Endothelial cell of umbilical vein (primary cell): ENCODE measurements at regions of chr12 and their contacts with region 1.

Region 1: GRCh38 chr12:15584366-15585041 is 204.7 kb downstream of the EPS8 start:
- DNase-seq: peak; percentile 52
- H3K4me3 ChIP-seq: no peak overlapping the region
- H3K27ac ChIP-seq: no peak overlapping the region
- H3K4me1 ChIP-seq: no peaks in the 10 kb centered on the region
- H3K27me3 ChIP-seq: peaks cover 5 to 11% of the 10 kb centered on the region in 2 experiments
- CTCF ChIP-seq: peak; percentile 48 to 60
- POLR2A ChIP-seq: no peak

Region 2: GRCh38 chr12:14769969-14770495 is 814.5 kb before region 1 on chr12:
- CTCF ChIA-PET with region 1: no interaction called
- POLR2A ChIA-PET with region 1: no interaction called
- dilution Hi-C with region 1: no loop called
- intact Hi-C with region 1: no loop called
- DNase-seq: peak; percentile 77
- H3K4me3 ChIP-seq: peak overlapping the region; percentile 22 to 82 (median 70)
- H3K27ac ChIP-seq: peak overlapping the region; percentile 91
- H3K4me1 ChIP-seq: peaks cover 7% of the 10 kb centered on the region
- H3K27me3 ChIP-seq: no peaks in the 10 kb centered on the region
- CTCF ChIP-seq: peak; percentile 73 to 87
- POLR2A ChIP-seq: peak; percentile 25

Region 3: DNA sequence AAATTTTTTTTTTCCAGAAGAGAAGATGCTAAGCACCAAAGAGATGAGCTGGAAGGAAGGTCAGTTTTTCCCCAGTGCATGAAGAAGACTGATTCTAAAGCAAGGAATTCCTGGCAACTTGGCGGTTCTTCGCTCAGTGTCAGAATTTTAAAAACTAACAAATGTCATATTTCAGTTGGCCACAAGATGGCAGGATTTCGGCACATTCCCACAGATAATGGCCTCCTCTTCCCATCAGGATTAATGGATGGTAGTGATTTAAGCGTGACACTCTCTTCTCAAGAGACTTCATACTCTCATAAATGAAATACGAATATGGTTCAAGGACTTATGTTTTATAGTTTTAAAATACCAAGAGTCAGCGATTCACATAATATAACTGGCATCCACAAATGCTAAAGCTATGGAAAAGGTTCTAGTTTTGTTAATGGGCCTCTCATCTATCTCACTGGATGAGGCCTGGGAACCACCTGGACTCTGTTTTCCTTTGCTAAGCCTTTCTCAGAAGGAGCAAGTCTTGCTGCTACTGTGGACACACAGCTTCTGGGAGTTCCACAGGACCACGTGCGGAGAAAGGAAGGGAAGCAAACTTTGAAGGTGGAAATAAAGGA is 308.3 kb before region 1 on chr12:
- CTCF ChIA-PET with region 1: interaction called, 84 read pairs
- POLR2A ChIA-PET with region 1: no interaction called
- dilution Hi-C with region 1: no loop called
- intact Hi-C with region 1: loop called (anchors 1 kb)
- DNase-seq: peak; percentile 52
- H3K4me3 ChIP-seq: no peak overlapping the region
- H3K27ac ChIP-seq: no peak overlapping the region
- H3K4me1 ChIP-seq: no peaks in the 10 kb centered on the region
- H3K27me3 ChIP-seq: peaks cover 0 to 1% of the 10 kb centered on the region in 2 experiments
- CTCF ChIP-seq: peak; percentile 58 to 59
- POLR2A ChIP-seq: no peak

Region 4: GRCh38 chr12:15540469-15540872 is 44.0 kb before region 1 on chr12:
- CTCF ChIA-PET with region 1: interaction called, 202 read pairs
- POLR2A ChIA-PET with region 1: no interaction called
- dilution Hi-C with region 1: no loop called
- intact Hi-C with region 1: no loop called
- DNase-seq: peak; percentile 70
- H3K4me3 ChIP-seq: no peak overlapping the region
- H3K27ac ChIP-seq: peak overlapping the region; percentile 64
- H3K4me1 ChIP-seq: peaks cover 12% of the 10 kb centered on the region
- H3K27me3 ChIP-seq: no peaks in the 10 kb centered on the region
- CTCF ChIP-seq: no peak
- POLR2A ChIP-seq: no peak

Region 5: GRCh38 chr12:15608941-15609340 is 24.4 kb after region 1 on chr12:
- CTCF ChIA-PET with region 1: interaction called, 12 read pairs
- POLR2A ChIA-PET with region 1: no interaction called
- dilution Hi-C with region 1: no loop called
- intact Hi-C with region 1: no loop called
- DNase-seq: no peak
- H3K4me3 ChIP-seq: no peak overlapping the region
- H3K27ac ChIP-seq: no peak overlapping the region
- H3K4me1 ChIP-seq: peaks cover 3% of the 10 kb centered on the region
- H3K27me3 ChIP-seq: no peaks in the 10 kb centered on the region
- CTCF ChIP-seq: no peak
- POLR2A ChIP-seq: no peak

Region 6: DNA sequence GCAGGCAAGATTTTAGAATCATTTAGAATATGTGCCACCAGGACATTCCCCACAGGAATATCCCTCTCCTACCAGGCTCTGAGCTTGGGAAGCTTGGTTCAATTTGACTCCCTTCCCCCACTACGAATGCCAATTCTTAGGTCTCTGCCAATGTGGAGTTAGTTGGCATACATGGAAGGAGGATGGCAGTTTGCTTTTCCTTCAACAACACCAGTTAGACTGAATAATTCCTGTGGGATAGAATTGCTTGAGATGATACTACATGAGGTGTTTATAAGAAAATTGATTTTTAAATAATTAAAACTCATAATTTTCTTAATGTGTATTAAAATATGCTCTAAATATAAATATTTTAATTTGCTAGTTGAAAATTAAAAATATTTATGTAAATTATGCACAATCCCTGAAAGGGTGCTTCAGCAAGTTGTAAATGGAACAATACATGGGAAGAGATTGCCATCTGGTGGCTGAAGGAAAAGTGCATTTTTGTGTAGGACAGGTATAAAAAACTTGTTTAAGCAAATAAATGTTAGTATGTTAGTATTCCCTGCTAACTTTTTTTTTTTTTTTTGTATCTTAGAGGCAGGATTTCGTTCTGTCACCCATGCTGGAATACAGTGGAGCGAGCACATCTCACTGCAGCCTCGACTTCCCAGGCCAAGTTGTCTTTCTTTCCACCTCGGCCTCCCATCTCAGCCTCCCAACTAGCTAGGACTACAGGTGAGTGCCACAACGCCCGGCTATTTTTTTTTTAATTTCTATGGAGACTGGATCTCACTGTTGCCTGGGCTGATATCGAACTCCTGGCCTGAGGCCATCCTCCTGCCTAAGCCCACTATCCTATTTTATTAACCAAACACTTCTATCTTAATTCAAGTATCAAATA is 271.8 kb after region 1 on chr12:
- CTCF ChIA-PET with region 1: interaction called, 150 read pairs
- POLR2A ChIA-PET with region 1: no interaction called
- dilution Hi-C with region 1: no loop called
- intact Hi-C with region 1: no loop called
- DNase-seq: peak; percentile 82
- H3K4me3 ChIP-seq: no peak overlapping the region
- H3K27ac ChIP-seq: no peak overlapping the region
- H3K4me1 ChIP-seq: no peaks in the 10 kb centered on the region
- H3K27me3 ChIP-seq: no peaks in the 10 kb centered on the region
- CTCF ChIP-seq: peak; percentile 37 to 42
- POLR2A ChIP-seq: no peak